Activated CD8-positive, alpha-beta T cell treated with anti-CD3 and anti-CD28 coated beads for 36 hours (primary cell): ENCODE measurements at regions of chr9 and their contacts with region 1.

Region 1: GRCh38 chr9:123349691-123350480 is 6.1 kb upstream of the CRB2 start:
- DNase-seq: peak; percentile 77
- ATAC-seq: peak; percentile 88
- H3K4me3 Mint-ChIP-seq: no peak overlapping the region
- H3K27ac Mint-ChIP-seq: no peak overlapping the region
- H3K4me1 Mint-ChIP-seq: peaks cover 4% of the 10 kb centered on the region
- H3K27me3 Mint-ChIP-seq: peaks cover 9% of the 10 kb centered on the region
- CTCF ChIP-seq: peak; percentile 96

Region 2: DNA sequence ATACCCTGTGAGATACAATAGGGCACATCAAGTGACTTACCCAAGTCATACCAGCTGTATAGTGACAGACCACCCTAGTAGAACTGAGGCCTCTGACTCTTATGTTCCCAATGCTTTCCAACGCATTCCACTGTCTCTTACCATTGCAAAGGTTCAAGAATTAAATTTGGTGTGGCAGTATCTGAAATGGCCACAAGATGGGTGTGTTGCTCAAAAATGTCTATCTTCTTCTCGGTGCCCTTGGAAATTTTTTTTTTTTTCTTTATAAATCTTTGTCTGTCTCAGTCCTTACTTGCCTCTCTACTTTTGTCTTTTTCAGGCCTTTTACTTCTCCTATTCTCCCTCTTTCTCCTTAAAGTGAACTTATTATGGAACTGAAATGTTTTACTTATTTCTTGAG is 268.1 kb before region 1 on chr9:
- CTCF ChIA-PET with region 1: interaction called, 63 read pairs
- POLR2A ChIA-PET with region 1: no interaction called
- intact Hi-C with region 1: loop called (anchors 5 kb)
- DNase-seq: peak; percentile 18
- ATAC-seq: peak; percentile 39
- H3K4me3 Mint-ChIP-seq: no peak overlapping the region
- H3K27ac Mint-ChIP-seq: no peak overlapping the region
- H3K4me1 Mint-ChIP-seq: no peaks in the 10 kb centered on the region
- H3K27me3 Mint-ChIP-seq: no peaks in the 10 kb centered on the region
- CTCF ChIP-seq: peak; percentile 60

Region 3: DNA sequence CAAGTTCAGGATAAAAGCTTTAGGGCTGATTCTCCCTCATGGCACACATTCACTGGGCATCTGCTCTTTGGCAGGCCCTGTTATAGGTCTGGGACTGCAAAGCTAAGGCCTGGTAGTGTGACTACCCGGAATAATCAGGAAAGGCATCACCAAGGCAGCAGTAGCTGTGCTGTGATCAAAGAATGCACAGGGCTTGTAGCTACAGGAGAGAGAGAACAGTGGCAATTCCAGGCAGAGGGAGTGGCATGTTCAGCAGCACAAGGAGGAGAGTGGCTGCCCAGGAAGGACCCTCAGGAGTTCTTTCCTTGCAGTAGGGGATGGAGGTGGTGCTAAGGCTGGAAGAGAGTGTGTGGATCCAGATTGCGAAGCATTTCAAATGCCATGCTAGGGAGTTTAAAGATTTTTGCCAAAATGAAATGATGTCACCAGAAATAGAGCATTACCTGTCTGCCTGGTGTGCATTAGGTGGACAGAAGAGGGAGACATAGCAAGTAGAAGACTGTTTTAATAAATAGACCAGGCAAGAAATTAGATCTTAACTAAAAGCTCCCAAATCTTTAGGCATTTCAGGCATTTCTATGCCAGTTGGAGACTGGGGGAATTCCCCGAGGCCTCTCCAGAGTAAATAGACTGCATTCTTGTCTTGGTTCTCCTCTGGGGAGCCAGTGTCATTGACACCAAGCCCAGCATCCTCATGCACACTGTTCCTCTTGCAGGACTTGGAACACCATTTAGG is 247.3 kb before region 1 on chr9:
- CTCF ChIA-PET with region 1: interaction called, 44 read pairs
- POLR2A ChIA-PET with region 1: interaction called, 3 read pairs
- intact Hi-C with region 1: no loop called
- DNase-seq: no peak
- ATAC-seq: no peak
- H3K4me3 Mint-ChIP-seq: no peak overlapping the region
- H3K27ac Mint-ChIP-seq: peak overlapping the region; percentile 22
- H3K4me1 Mint-ChIP-seq: no peaks in the 10 kb centered on the region
- H3K27me3 Mint-ChIP-seq: no peaks in the 10 kb centered on the region
- CTCF ChIP-seq: peak; percentile 24

Region 4: DNA sequence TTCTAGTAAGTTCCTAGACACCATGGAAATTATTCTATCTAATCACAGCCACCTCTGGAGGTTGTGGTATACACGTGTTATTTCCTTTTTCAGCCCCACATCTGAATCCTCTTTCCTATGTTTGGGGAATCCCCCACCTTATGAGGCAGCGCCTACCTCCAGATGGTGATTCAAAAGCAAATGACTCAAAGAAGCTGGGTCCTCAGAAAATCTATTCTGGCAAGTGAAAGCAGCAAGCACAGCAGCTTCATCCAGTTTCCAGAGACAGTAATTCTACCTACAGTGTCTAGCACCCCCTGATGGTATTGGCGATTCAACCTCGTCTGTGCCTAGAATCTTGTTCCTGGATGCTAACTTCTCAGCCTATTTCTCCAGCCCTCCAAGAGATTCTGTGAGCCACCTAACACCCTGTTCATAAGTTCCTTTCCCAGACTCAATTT is 124.5 kb before region 1 on chr9:
- CTCF ChIA-PET with region 1: interaction called, 22 read pairs
- POLR2A ChIA-PET with region 1: no interaction called
- intact Hi-C with region 1: no loop called
- DNase-seq: peak; percentile 81
- ATAC-seq: peak; percentile 98
- H3K4me3 Mint-ChIP-seq: peak overlapping the region; percentile 21
- H3K27ac Mint-ChIP-seq: peak overlapping the region; percentile 77
- H3K4me1 Mint-ChIP-seq: peaks cover 41% of the 10 kb centered on the region
- H3K27me3 Mint-ChIP-seq: no peaks in the 10 kb centered on the region
- CTCF ChIP-seq: peak; percentile 54

Region 5: GRCh38 chr9:123268240-123268949 is 81.5 kb before region 1 on chr9 and contains the start of gene STRBP:
- CTCF ChIA-PET with region 1: interaction called, 11 read pairs
- POLR2A ChIA-PET with region 1: interaction called, 6 read pairs
- intact Hi-C with region 1: no loop called
- DNase-seq: peak; percentile 93
- ATAC-seq: peak; percentile 90
- H3K4me3 Mint-ChIP-seq: peak within 1 kb of the TSS; percentile 69
- H3K27ac Mint-ChIP-seq: peak within 1 kb of the TSS; percentile 13
- H3K4me1 Mint-ChIP-seq: peaks cover 37% of the 10 kb centered on the region
- H3K27me3 Mint-ChIP-seq: no peaks in the 10 kb centered on the region
- CTCF ChIP-seq: no peak
- total RNA-seq, gene STRBP: 40.7 to 43.2 TPM

Region 6: GRCh38 chr9:123375469-123376132 is 25.7 kb after region 1 on chr9:
- CTCF ChIA-PET with region 1: interaction called, 12 read pairs
- POLR2A ChIA-PET with region 1: no interaction called
- intact Hi-C with region 1: no loop called
- DNase-seq: no peak
- ATAC-seq: peak; percentile 40
- H3K4me3 Mint-ChIP-seq: no peak overlapping the region
- H3K27ac Mint-ChIP-seq: no peak overlapping the region
- H3K4me1 Mint-ChIP-seq: no peaks in the 10 kb centered on the region
- H3K27me3 Mint-ChIP-seq: peaks cover 40% of the 10 kb centered on the region
- CTCF ChIP-seq: no peak

Region 7: GRCh38 chr9:123658792-123659191 is 308.9 kb after region 1 on chr9:
- CTCF ChIA-PET with region 1: no interaction called
- POLR2A ChIA-PET with region 1: no interaction called
- intact Hi-C with region 1: no loop called
- DNase-seq: no peak
- ATAC-seq: no peak
- H3K4me3 Mint-ChIP-seq: no peak overlapping the region
- H3K27ac Mint-ChIP-seq: no peak overlapping the region
- H3K4me1 Mint-ChIP-seq: no peaks in the 10 kb centered on the region
- H3K27me3 Mint-ChIP-seq: no peaks in the 10 kb centered on the region
- CTCF ChIP-seq: no peak